Activated T-helper 1 cell treated with anti-CD3 and anti-CD28 coated beads, Interleukin-12 subunit alpha, Interleukin-12 subunit beta, Interleukin-2, Interleukin-4 antibody, amounts not matched to agents 30 ng/mL and 10 ng/mL and 1 ng/mL, durations not matched to agents 14 hours and 24 hours and 36 hours (primary cell): ENCODE measurements at regions of chr13 and their contacts with region 1.

Region 1: DNA sequence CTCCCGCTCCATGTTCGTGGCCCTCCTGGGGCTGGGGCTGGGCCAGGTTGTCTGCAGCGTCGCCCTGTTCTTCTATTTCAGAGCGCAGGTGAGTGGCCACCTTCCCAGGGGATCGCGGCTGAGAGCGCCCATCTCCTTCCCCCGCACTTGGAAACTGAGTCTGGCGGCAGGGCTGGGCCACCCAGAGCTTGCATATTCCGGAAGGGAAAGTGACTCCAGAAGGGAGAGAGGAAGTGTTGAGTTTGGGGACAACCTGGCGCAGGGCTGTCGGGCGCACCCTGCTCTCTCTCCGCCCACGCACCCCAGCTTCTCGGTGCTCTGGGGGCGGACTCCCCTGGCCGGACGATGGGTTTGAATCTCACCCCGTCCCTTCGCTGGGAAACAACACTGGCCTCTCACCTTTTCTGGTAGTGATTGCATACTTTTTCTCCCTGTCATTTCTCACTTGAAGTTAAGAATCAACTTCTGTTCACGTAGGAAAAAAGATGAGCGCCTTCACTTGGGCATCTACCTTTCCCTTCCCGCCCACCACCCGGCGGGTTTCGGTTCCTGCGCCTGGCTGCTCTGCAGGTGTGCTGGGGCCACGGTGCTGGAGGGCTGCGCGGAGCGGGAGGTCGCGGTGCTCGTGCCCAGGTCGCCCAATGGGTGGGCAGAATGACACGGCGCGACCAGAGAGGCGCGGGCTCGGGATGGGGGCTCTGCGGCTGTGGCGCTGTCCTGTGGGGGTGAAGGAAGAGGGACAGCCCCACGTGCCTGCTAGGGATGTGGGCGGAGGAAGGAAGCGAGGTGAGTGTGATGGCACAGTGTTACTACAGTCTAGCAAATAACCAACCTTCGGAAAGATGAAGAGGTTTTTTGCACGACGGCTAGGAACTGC is 721 bp downstream of the TNFSF11 start:
- DNase-seq: no peak
- H3K4me3 Mint-ChIP-seq: peak overlapping the region; percentile 74
- H3K27ac Mint-ChIP-seq: peak overlapping the region; percentile 64
- H3K4me1 Mint-ChIP-seq: peaks cover 19% of the 10 kb centered on the region
- H3K27me3 Mint-ChIP-seq: peaks cover 59% of the 10 kb centered on the region

Region 2: DNA sequence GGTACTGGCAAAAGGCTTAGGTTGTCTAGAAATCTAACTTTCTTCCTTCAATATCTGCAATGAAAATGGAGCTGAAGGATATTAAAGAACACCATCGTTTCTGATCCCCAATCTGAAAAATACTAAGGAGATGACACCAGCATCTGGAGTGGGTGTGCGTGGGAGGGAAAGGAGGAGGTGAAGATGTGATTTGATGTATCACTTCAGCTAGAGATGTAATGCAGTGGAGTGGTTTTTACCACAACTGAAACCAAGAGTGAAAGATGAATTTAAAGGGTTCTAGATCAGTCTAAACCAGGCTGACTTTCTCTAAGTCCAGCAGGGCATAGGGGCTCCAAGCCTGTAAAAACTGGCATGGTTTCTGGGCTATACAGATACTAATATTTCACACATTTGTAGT is 154.4 kb before region 1 on chr13:
- intact Hi-C with region 1: loop called (anchors 1 kb)
- DNase-seq: no peak
- H3K4me3 Mint-ChIP-seq: peak overlapping the region; percentile 54
- H3K27ac Mint-ChIP-seq: peak overlapping the region; percentile 83
- H3K4me1 Mint-ChIP-seq: peaks cover 43% of the 10 kb centered on the region
- H3K27me3 Mint-ChIP-seq: peaks cover 2% of the 10 kb centered on the region